B cell (primary cell): ENCODE measurements at regions of chr16 and their contacts with region 1.

Region 1: DNA sequence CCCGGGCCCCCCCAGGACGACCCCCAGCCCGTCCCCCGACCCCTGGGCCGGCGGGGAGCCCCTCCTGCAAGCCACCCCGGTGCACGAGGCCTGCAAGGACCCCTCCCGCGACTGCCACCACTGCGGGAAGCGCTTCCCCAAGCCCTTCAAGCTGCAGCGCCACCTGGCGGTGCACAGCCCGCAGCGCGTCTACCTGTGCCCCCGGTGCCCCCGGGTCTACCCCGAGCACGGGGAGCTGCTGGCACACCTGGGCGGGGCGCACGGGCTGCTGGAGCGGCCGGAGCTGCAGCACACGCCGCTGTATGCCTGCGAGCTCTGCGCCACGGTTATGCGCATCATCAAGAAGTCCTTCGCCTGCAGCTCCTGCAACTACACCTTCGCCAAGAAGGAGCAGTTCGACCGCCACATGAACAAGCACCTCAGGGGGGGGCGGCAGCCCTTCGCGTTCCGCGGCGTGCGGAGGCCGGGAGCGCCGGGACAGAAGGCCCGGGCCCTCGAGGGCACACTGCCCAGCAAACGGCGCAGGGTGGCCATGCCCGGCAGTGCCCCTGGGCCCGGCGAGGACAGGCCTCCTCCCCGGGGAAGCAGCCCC is 15.6 kb upstream of the ZFPM1 start:
- DNase-seq: peak; percentile 79
- ATAC-seq: peak; percentile 82
- H3K4me3 ChIP-seq: no peak overlapping the region
- H3K4me3 Mint-ChIP-seq: no peak overlapping the region
- H3K27ac ChIP-seq: no peak overlapping the region
- H3K27ac Mint-ChIP-seq: no peak overlapping the region
- H3K4me1 ChIP-seq: no peaks in the 10 kb centered on the region
- H3K4me1 Mint-ChIP-seq: no peaks in the 10 kb centered on the region
- H3K27me3 ChIP-seq: no peaks in the 10 kb centered on the region
- H3K27me3 Mint-ChIP-seq: no peaks in the 10 kb centered on the region
- CTCF ChIP-seq: peak; percentile 87

Region 2: DNA sequence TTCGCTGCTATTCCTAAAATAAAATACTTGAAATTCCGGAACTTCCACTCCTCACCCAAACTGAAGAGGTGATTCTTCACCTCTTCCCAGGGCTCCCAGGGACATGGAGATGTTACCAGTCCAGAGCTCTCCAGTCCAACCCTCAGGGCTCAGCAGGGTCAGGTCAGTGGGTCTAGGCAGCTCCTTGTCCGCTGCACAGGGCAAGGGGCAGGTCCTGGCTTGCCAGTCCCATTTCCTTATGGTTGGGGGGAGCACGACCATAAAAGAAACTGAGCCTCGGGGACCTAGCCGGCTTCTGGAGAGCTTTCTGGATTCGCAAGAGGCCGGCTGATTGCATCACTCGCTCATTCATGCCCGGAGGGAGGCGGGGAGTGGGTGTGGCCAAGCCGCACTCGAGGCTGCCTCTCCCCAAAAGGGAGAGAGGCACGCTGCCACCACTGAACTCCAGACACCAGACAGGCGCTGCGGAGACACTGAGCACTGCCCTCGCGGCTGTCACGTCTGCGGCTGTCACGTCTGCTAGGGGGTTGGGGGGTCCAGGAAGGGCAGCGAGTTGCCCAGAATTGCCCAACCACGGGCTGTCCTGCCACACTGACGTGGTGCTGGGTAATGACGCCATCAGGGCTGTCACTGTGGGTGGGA is 583.9 kb before region 1 on chr16:
- CTCF ChIA-PET with region 1: interaction called, 9 read pairs
- POLR2A ChIA-PET with region 1: no interaction called
- intact Hi-C with region 1: loop called (anchors 2 kb)
- DNase-seq: peak; percentile 80
- ATAC-seq: peak; percentile 69
- H3K4me3 ChIP-seq: peak overlapping the region in 2 of 5 experiments; percentile 22 to 46
- H3K4me3 Mint-ChIP-seq: peak overlapping the region; percentile 71
- H3K27ac ChIP-seq: no peak overlapping the region
- H3K27ac Mint-ChIP-seq: peak overlapping the region; percentile 15
- H3K4me1 ChIP-seq: peaks cover 4 to 37% of the 10 kb centered on the region in 2 donors
- H3K4me1 Mint-ChIP-seq: peaks cover 29% of the 10 kb centered on the region
- H3K27me3 ChIP-seq: no peaks in the 10 kb centered on the region
- H3K27me3 Mint-ChIP-seq: no peaks in the 10 kb centered on the region
- CTCF ChIP-seq: no peak

Region 3: DNA sequence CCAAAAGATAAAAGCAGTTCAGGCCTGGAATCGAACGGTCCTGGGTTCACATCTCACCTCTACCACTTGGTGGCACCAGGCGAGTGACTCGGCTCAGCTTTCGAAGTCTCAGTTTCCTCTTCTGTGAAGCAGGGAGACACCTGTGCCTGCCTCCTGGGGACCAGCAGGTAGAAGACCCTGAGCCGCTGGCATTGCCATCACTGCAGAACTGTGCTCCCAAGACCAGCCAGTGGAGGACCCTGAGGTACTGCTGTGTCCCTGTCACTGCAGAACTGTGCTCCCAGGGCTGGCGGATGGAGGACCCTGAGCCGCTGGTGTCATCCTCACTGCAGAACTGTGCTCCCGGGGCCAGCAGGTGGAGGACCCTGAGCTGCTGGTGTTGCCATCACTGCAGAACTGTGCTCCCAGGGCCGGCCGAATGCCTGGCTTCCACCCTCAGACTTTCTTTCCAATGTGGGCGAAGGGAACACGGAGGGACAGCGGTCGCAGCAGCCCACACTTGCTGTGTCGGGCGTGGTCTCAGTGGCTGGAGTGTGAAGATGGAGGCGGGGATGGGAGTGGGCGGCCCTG is 559.4 kb before region 1 on chr16:
- CTCF ChIA-PET with region 1: interaction called, 5 read pairs
- POLR2A ChIA-PET with region 1: no interaction called
- intact Hi-C with region 1: loop called (anchors 10 kb)
- DNase-seq: no peak
- ATAC-seq: no peak
- H3K4me3 ChIP-seq: no peak overlapping the region
- H3K4me3 Mint-ChIP-seq: no peak overlapping the region
- H3K27ac ChIP-seq: no peak overlapping the region
- H3K27ac Mint-ChIP-seq: no peak overlapping the region
- H3K4me1 ChIP-seq: no peaks in the 10 kb centered on the region
- H3K4me1 Mint-ChIP-seq: peaks cover 7% of the 10 kb centered on the region
- H3K27me3 ChIP-seq: peaks cover 0 to 7% (median 1%) of the 10 kb centered on the region in 4 experiments
- H3K27me3 Mint-ChIP-seq: peaks cover 23% of the 10 kb centered on the region
- CTCF ChIP-seq: no peak

Region 4: DNA sequence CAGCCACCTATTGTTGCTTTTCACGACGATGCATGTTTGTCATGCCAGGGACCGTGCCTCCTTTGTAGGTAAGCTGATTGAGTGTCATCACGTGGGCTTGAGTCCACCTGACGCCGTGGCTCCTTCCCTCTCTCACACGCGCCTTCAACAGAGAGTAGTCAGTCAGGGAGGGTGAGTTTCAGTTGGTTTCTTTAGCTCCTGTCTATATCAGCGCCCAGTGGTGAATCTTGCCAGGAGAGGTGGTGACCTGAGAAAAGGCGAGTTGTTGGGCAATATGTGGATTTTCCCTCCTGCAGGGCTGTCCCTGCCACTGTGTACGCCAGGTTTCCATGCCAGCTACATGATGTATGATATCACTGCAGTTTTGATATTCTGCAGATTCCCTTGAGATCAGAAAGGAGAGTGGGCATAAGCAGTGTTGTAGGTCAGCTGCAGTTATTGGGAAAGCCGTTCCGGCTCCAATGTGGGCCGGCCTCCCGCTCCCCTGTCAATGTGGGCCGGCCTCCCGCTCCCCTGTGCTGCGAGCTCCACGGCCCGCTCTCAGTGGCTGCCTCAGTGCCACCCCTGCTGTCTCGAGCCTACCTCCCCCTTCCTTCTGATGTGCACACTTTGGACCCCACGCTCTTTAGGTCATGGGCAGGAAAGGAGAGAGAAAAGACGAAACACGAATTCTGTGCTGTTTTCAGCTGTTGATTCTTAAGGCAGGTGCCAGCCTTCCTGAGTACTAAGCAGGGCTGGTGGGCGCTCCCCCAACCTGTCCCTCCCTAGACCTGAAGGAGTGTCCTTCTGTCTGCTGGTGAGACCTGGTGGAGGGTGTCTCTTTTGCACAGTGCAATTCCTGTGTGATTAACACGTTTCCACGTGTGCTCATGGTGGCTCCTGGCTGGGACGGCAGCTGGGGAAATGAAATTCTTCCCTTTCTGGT is 454.7 kb before region 1 on chr16:
- CTCF ChIA-PET with region 1: interaction called, 15 read pairs
- POLR2A ChIA-PET with region 1: no interaction called
- intact Hi-C with region 1: no loop called
- DNase-seq: no peak
- ATAC-seq: peak; percentile 11
- H3K4me3 ChIP-seq: no peak overlapping the region
- H3K4me3 Mint-ChIP-seq: peak overlapping the region; percentile 10
- H3K27ac ChIP-seq: no peak overlapping the region
- H3K27ac Mint-ChIP-seq: peak overlapping the region; percentile 76
- H3K4me1 ChIP-seq: no peaks in the 10 kb centered on the region
- H3K4me1 Mint-ChIP-seq: peaks cover 31% of the 10 kb centered on the region
- H3K27me3 ChIP-seq: no peaks in the 10 kb centered on the region
- H3K27me3 Mint-ChIP-seq: no peaks in the 10 kb centered on the region
- CTCF ChIP-seq: no peak

Region 5: DNA sequence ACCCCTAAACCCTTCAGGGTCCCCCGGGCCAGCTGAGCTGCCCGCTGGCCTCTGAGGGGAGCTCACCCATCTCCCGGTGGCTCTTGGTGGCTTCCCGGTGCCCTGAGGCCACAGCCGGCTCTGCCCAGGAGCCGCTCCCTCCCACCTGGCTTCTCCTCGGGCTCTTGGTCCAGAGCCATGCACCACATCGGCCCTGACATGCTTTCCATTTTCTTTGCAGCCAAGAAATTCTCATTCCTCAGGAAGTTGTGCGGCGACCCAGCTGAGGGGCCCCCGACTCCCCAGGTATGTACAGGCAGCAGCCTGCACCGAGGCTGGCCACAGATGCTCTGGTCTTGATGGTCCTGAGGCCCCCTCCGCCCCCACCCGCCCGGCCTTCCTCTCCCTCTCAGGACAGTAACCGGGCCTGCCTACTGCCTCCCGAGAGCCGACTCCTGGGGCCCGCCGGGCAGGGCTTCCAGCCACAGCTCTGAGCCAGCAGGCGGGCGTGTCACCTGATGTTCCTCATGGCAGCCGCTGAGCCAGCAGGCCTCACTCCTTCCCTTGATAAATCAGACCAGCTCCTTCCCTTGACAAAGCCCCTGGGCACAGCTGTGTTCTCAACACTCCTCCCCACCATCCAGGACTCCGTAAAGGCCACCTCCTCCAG is 12.8 kb before region 1 on chr16:
- CTCF ChIA-PET with region 1: interaction called, 13 read pairs
- POLR2A ChIA-PET with region 1: no interaction called
- intact Hi-C with region 1: no loop called
- DNase-seq: no peak
- ATAC-seq: no peak
- H3K4me3 ChIP-seq: no peak overlapping the region
- H3K4me3 Mint-ChIP-seq: no peak overlapping the region
- H3K27ac ChIP-seq: no peak overlapping the region
- H3K27ac Mint-ChIP-seq: peak overlapping the region; percentile 11
- H3K4me1 ChIP-seq: peaks cover 4% of the 10 kb centered on the region in 2 donors
- H3K4me1 Mint-ChIP-seq: peaks cover 7% of the 10 kb centered on the region
- H3K27me3 ChIP-seq: peaks cover 0 to 2% (median 0%) of the 10 kb centered on the region in 4 experiments
- H3K27me3 Mint-ChIP-seq: no peaks in the 10 kb centered on the region
- CTCF ChIP-seq: no peak

Region 6: GRCh38 chr16:88527186-88527936 is 89.9 kb after region 1 on chr16:
- CTCF ChIA-PET with region 1: interaction called, 11 read pairs
- POLR2A ChIA-PET with region 1: no interaction called
- intact Hi-C with region 1: no loop called
- DNase-seq: peak; percentile 76
- ATAC-seq: peak; percentile 81
- H3K4me3 ChIP-seq: no peak overlapping the region
- H3K4me3 Mint-ChIP-seq: no peak overlapping the region
- H3K27ac ChIP-seq: no peak overlapping the region
- H3K27ac Mint-ChIP-seq: no peak overlapping the region
- H3K4me1 ChIP-seq: peaks cover 0 to 6% of the 10 kb centered on the region in 2 donors
- H3K4me1 Mint-ChIP-seq: peaks cover 5% of the 10 kb centered on the region
- H3K27me3 ChIP-seq: no peaks in the 10 kb centered on the region
- H3K27me3 Mint-ChIP-seq: no peaks in the 10 kb centered on the region
- CTCF ChIP-seq: peak; percentile 90

Region 7: DNA sequence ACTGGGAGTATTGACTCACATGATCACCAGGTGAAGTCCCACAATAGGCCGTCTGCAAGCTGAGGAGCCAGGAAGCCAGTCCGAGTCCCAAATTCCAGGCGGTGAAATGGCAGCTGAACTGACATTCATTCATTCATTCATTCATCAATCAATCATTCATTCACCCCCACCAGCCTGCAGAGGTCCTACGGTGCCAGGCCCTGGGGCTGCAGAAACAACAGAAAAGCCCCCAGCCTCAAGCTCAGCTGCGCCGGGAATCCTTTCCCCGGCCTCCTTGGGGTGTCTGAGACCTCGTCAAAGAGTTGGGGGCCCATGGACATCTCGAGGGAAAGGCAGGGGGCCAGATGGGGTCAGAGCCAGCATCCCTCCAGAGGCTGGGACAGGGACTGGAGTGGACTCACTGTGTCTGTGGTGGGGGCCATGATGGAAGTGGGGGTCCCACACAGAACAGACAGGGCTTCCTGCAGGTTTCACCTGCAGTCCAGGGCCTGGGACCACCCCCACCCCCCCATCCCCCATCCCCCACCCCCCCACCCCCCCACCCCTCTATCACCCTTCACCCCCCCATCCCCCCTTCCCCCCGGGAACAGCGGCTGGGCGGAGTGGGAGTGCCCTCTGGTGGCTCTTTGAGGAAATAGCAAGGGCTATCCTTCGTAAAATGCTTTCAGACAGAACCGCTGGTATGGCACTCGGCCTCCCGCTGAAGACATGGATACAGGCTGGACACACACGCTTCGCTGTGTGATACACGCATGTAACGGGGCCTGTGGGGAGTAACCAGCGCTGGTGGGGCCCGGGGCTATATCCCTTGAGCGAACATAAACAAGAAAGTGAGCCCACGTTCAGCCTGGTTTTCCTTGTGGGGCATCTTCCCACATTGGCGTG is 124.3 kb after region 1 on chr16:
- CTCF ChIA-PET with region 1: interaction called, 23 read pairs
- POLR2A ChIA-PET with region 1: no interaction called
- intact Hi-C with region 1: no loop called
- DNase-seq: peak; percentile 74
- ATAC-seq: peak; percentile 91
- H3K4me3 ChIP-seq: no peak overlapping the region
- H3K4me3 Mint-ChIP-seq: no peak overlapping the region
- H3K27ac ChIP-seq: no peak overlapping the region
- H3K27ac Mint-ChIP-seq: peak overlapping the region; percentile 26
- H3K4me1 ChIP-seq: peaks cover 3 to 12% of the 10 kb centered on the region in 2 donors
- H3K4me1 Mint-ChIP-seq: peaks cover 3% of the 10 kb centered on the region
- H3K27me3 ChIP-seq: peaks cover 0 to 16% (median 0%) of the 10 kb centered on the region in 4 experiments
- H3K27me3 Mint-ChIP-seq: peaks cover 7% of the 10 kb centered on the region
- CTCF ChIP-seq: peak; percentile 60